Caco-2 (cell line): ENCODE measurements at regions of chr4 and their contacts with region 1.

Region 1: DNA sequence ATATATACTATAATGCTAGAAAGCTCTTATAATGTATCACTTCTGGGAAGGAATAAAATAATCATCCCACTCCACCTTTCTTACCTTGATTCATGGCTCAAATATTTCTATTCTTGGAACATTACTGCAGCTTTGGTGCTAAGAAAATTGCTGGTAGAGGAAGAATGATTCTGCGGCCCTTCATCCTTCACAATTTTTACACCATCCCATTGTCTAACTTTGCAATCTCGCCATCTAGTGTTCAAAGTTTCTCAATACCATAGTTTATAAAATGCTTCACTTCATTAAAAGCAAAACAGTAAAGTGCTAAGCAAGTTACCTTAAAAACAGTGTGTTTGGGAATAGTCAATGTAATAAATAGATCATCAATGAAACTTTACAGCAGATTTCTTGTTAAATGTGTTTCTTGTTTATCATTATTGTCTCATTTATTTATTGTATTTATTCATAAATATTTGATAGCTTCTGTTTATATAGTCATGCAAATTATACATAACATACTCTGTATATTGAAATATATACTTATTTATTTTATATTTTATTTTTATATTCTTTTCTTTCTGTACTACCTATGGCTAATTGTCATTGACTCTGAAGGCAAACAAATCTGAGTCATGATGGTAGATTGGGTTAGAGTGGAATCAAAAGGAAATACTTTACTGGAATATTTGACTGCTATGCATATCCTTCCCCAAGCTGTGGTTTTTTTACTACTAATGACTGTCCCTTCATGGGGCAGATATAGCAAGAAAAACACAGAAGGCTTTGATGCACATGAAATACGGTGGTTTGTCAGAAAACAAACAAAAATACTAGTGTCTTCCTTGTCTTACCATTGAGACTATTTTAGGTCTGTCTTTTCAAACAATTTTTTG is 390.7 kb downstream of the MAPK10 start:
- DNase-seq: peak in 1 of 2 experiments; percentile 24
- H3K4me3 ChIP-seq: no peak overlapping the region
- H3K4me3 Mint-ChIP-seq: no peak overlapping the region
- H3K27ac Mint-ChIP-seq: no peak overlapping the region
- H3K4me1 ChIP-seq: no peaks in the 10 kb centered on the region
- H3K4me1 Mint-ChIP-seq: no peaks in the 10 kb centered on the region
- H3K27me3 ChIP-seq: no peaks in the 10 kb centered on the region
- H3K27me3 Mint-ChIP-seq: no peaks in the 10 kb centered on the region
- CTCF ChIP-seq: peak; percentile 44 to 49

Region 2: GRCh38 chr4:85658766-85659439 is 310.3 kb before region 1 on chr4:
- CTCF ChIA-PET with region 1: no interaction called
- POLR2A ChIA-PET with region 1: no interaction called
- intact Hi-C with region 1: no loop called
- DNase-seq: no peak
- H3K4me3 ChIP-seq: no peak overlapping the region
- H3K4me3 Mint-ChIP-seq: no peak overlapping the region
- H3K27ac Mint-ChIP-seq: no peak overlapping the region
- H3K4me1 ChIP-seq: no peaks in the 10 kb centered on the region
- H3K4me1 Mint-ChIP-seq: no peaks in the 10 kb centered on the region
- H3K27me3 ChIP-seq: no peaks in the 10 kb centered on the region
- H3K27me3 Mint-ChIP-seq: peaks cover 3% of the 10 kb centered on the region
- CTCF ChIP-seq: no peak

Region 3: DNA sequence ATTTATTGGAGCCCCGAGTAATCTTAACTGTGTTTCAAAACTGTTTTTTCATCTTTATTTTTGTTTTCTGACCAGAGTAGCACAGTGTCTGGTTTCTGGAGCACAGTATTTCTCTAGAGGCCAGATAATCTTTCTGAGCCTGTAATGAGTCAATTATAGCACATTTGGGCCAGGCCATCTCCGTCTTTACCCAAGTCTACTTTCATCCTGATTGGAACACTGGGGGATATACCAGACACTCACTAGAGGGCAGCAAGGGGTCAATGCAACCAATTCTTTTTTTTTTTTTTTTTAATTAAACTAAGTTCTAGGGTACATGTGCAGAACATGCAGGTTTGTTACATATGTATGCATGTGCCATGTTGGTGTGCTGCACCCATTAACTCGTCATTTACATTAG is 212.2 kb before region 1 on chr4:
- CTCF ChIA-PET with region 1: no interaction called
- POLR2A ChIA-PET with region 1: no interaction called
- intact Hi-C with region 1: loop called (anchors 2 kb)
- DNase-seq: peak in 1 of 2 experiments; percentile 38
- H3K4me3 ChIP-seq: no peak overlapping the region
- H3K4me3 Mint-ChIP-seq: no peak overlapping the region
- H3K27ac Mint-ChIP-seq: no peak overlapping the region
- H3K4me1 ChIP-seq: no peaks in the 10 kb centered on the region
- H3K4me1 Mint-ChIP-seq: no peaks in the 10 kb centered on the region
- H3K27me3 ChIP-seq: no peaks in the 10 kb centered on the region
- H3K27me3 Mint-ChIP-seq: peaks cover 3% of the 10 kb centered on the region
- CTCF ChIP-seq: peak in 1 of 2 experiments; percentile 24

Region 4: DNA sequence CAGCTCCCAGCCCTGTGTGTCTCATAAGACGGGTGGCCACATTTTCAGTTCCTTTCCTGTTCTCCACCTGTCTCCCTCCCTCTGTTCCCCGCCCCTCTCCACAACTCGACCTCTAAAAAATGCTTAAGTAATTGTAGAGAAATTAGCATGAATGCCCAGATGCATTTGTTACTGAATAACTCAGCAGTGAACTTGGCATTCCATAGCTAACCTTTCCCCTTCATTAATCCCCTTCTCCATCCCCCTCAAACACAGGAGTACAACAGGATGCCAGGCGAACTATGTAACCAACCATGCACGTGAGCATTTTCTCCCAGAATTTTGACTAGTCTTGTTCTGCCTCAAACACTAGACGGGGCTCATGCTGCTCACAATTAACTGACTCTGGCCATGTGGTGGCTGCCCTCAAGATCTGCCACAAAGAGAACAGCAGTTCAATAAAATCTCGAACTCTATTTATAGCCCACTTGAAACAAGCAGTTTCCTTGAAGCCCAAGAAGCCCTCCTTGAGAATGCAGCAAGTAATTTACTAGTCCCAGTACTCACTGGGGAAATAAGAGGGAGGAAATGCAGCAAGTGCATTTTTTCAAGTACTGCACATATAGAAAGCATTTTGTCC is 143.0 kb before region 1 on chr4:
- CTCF ChIA-PET with region 1: interaction called, 5 read pairs
- POLR2A ChIA-PET with region 1: no interaction called
- intact Hi-C with region 1: loop called (anchors 1 kb)
- DNase-seq: peak in 1 of 2 experiments; percentile 40
- H3K4me3 ChIP-seq: no peak overlapping the region
- H3K4me3 Mint-ChIP-seq: no peak overlapping the region
- H3K27ac Mint-ChIP-seq: peak overlapping the region; percentile 13
- H3K4me1 ChIP-seq: peaks cover 12% of the 10 kb centered on the region; the same call in 1 of the 2 replicates
- H3K4me1 Mint-ChIP-seq: peaks cover 15% of the 10 kb centered on the region
- H3K27me3 ChIP-seq: no peaks in the 10 kb centered on the region
- H3K27me3 Mint-ChIP-seq: no peaks in the 10 kb centered on the region
- CTCF ChIP-seq: peak; percentile 14 to 41

Region 5: DNA sequence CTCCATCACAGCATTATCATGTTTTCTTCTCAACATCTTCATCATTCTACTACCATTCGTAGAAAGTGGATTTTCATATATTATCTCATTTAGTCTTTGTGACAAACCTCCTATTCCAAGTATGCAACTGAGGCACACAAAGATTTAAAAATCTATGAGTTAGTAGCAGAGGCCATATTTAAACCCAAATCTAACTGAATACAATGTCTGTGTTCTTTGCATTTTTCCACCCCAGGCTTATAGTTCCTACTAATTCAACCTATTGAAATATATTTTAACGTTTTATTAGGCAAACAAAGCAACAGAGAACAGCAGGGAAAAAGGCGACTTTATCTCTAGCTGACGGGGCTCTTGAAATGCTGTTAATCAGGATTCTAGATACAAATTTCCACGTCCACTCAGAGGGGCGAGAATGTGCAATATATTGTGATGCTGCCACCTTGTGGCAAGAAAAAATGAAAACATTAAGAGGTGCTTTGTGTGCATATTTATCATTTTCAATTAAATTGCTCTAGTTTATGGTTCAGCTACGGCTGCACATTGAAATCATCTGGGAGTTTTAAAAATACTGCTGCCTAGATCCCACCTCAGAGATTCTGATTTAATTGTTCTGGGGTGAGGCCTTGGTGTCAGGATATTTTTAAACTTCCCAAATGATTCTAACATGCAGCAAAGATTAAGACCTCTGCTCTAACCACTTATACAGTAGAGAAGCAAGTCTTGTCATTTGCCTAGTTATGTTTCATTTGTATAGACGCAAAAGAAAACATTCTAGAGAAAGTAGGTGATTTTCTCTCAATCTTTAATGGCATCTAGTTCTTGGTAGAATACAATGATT is 74.8 kb after region 1 on chr4:
- CTCF ChIA-PET with region 1: no interaction called
- POLR2A ChIA-PET with region 1: no interaction called
- intact Hi-C with region 1: loop called (anchors 5 kb)
- DNase-seq: peak in 1 of 2 experiments; percentile 49
- H3K4me3 ChIP-seq: no peak overlapping the region
- H3K4me3 Mint-ChIP-seq: no peak overlapping the region
- H3K27ac Mint-ChIP-seq: no peak overlapping the region
- H3K4me1 ChIP-seq: 0 out of 2 replicates have a peak, but pooled peaks cover 2% of the 10 kb centered on the region
- H3K4me1 Mint-ChIP-seq: no peaks in the 10 kb centered on the region
- H3K27me3 ChIP-seq: no peaks in the 10 kb centered on the region
- H3K27me3 Mint-ChIP-seq: peaks cover 11% of the 10 kb centered on the region
- CTCF ChIP-seq: peak; percentile 49 to 55